ENCODE measurements at regions of chr14 and their contacts with region 1.

Region 1: GRCh38 chr14:41222581-41222980 is 384.1 kb upstream of the LRFN5 start:
- DNase-seq: no peak
- ATAC-seq: no peak

Region 2: DNA sequence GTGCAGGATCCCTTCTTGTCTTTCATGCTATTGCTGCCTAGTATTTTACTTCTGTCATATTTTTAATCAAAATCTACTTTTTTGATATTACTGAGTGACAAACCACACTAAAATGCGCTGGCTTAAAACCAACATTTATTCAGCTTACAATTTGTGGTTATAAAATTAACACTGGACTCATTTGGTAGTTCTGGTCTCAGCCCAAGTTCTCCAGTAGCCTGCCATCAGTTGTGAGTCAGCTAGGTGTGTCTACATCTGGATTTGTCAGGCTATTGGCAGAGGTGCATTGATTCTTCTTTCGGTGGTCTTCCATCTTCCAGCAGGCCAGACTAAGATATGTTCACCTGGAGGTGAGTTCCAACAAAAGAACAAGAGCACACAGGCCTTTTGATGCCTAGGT is 1025.2 kb before region 1 on chr14:
- intact Hi-C with region 1: loop called (anchors 10 kb)
- DNase-seq: no peak
- ATAC-seq: no peak

Region 3: DNA sequence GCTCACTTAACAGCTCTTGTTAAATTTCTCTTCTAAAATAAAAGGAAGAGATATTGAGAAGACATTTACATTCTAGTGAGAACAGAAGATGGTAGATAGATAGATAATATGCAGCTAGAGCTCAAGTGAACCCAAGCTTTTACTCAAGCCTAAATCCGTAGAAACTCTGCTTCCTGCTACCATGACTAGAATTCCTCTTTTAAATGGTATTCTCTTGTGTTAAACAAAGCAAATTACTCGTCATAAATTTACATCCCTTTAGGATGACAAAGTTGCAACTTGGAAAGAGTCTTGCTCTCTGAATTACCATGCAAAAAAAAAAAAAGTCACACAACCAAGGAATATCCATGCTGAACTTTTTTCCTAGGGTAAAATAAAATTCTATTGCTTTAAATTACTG is 223.4 kb after region 1 on chr14:
- intact Hi-C with region 1: no loop called
- DNase-seq: no peak
- ATAC-seq: no peak